ENCODE measurements at regions of chr1 and their contacts with region 1.

Region 1: DNA sequence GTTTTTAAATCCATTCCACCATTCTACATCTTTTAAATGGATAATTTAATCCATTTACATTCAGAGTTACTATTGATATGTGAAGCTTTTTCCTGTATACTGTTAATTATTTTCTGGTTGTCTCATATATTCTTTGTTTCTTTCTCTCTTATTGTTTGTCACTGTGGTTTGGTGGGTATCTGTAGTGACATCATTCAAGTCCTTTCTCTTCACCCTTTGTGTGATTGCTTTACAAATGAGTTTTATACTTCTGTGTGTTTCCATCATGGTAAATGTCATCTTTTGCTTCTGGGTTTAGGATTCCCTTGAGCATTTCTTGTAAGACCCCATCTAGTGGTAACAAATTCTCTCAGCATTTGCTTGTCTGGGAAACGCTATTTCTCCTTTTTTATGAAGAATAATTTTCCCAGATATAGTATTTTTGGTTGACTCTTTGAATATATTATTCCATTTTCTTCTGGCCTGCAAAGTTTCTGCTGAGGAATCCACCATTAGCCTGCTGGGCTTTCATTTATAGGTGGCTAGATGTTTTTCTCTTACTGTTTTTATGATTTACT is 10.2 kb downstream of the LY9 start:
- DNase-seq: peak in 1 of 35 experiments; percentile 22
- ATAC-seq: peak in 1 of 4 experiments; percentile 46
- H3K4me3 ChIP-seq: no peak overlapping the region
- H3K4me3 Mint-ChIP-seq: peak overlapping the region in 2 of 3 donors; percentile 41 to 71
- H3K27ac ChIP-seq: no peak overlapping the region
- H3K27ac Mint-ChIP-seq: peak overlapping the region in 1 of 2 donors; percentile 69
- H3K4me1 ChIP-seq: peaks cover 12 to 38% of the 10 kb centered on the region in 2 experiments
- H3K4me1 Mint-ChIP-seq: peaks cover 84 to 91% (median 85%) of the 10 kb centered on the region in 3 donors
- H3K27me3 ChIP-seq: no peaks in the 10 kb centered on the region
- H3K27me3 Mint-ChIP-seq: no peaks in the 10 kb centered on the region

Region 2: GRCh38 chr1:160795951-160796383 is 10.2 kb before region 1 on chr1 and contains the start of gene LY9:
- CTCF ChIA-PET with region 1: interaction called in 1 of 2 experiments, 19 read pairs
- POLR2A ChIA-PET with region 1: interaction called, 5 to 6 read pairs
- DNase-seq: peak; percentile 45 to 95 (median 84)
- ATAC-seq: peak; percentile 86 to 90 (median 87)
- H3K4me3 ChIP-seq: peak within 1 kb of the TSS; percentile 72 to 92
- H3K4me3 Mint-ChIP-seq: peak within 1 kb of the TSS; percentile 93 to 99 (median 98)
- H3K27ac ChIP-seq: peak within 1 kb of the TSS; percentile 93
- H3K27ac Mint-ChIP-seq: peak within 1 kb of the TSS; percentile 99
- H3K4me1 ChIP-seq: peaks cover 33 to 37% of the 10 kb centered on the region in 2 experiments
- H3K4me1 Mint-ChIP-seq: peaks cover 45 to 66% (median 61%) of the 10 kb centered on the region in 3 donors
- H3K27me3 ChIP-seq: no peaks in the 10 kb centered on the region
- H3K27me3 Mint-ChIP-seq: no peaks in the 10 kb centered on the region
- total RNA-seq, gene LY9: 95.4 to 127 (median 101) TPM

Region 3: DNA sequence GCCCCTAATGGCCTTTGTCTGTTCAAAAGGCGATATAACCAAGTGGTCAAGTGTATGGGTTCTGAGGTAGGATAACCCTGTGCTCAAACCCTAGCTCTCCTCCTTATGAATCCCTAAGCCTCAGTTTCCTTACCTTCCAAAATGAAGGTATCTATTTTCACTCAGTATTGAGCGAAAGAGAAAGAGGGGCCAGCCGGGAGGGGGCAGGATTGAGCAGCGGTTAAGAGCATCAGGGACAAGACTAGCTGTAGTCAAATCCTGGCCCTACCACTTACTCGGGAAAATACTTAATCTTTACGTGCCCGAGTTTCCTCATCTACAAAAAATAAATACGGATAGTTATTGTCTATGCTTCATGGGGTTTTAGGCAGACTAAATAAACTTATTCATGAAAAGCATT is 15.4 kb after region 1 on chr1:
- CTCF ChIA-PET with region 1: interaction called in 1 of 2 experiments, 4 read pairs
- POLR2A ChIA-PET with region 1: interaction called in 1 of 2 experiments, 11 read pairs
- DNase-seq: no peak
- ATAC-seq: no peak
- H3K4me3 ChIP-seq: no peak overlapping the region
- H3K4me3 Mint-ChIP-seq: no peak overlapping the region
- H3K27ac ChIP-seq: no peak overlapping the region
- H3K27ac Mint-ChIP-seq: peak overlapping the region; percentile 70 to 73
- H3K4me1 ChIP-seq: no peaks in the 10 kb centered on the region
- H3K4me1 Mint-ChIP-seq: peaks cover 0 to 6% (median 0%) of the 10 kb centered on the region in 3 donors
- H3K27me3 ChIP-seq: no peaks in the 10 kb centered on the region
- H3K27me3 Mint-ChIP-seq: no peaks in the 10 kb centered on the region

Region 4: DNA sequence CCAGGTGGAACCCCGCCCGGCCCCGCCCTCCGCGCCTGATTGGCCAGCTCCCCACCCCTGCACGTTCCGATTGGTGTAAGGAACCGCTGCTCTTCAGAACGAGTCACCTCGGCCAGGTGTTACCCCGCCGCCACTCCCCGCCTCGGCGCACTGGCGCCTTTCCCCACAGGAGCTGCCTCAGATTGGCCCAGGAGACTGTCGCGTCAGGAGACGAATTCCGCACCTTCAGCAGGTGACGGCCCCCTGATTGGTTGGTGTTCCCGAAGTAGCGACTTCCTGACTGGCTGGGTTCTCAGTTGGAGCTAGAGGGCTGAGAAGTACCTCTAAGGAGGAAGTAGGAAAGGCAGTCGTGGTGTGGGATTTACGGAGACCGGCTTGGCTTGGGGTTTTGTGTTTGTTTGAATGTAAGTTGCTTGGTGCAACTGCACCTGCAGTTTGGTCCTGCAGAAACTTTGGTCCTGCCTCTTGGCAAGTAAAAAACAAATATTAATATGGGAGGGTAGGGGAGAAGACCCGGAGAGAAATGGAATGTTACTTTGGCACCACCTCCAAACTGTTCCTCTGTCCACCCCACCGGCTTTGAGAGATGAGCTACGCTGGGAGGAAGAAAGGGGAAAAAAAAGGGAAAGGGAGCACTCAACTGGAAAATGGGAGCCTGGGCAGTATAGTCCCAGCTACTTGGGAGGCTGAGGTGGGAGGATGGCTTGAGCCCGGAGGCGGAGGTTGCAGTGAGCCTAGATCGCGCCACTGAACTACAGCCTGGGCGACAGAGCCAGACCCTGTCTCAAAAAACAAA is 215.2 kb after region 1 on chr1:
- CTCF ChIA-PET with region 1: no interaction called
- POLR2A ChIA-PET with region 1: interaction called in 1 of 2 experiments, 11 read pairs
- DNase-seq: peak; percentile 72 to 94 (median 91)
- ATAC-seq: peak; percentile 94 to 97 (median 95)
- H3K4me3 ChIP-seq: peak overlapping the region; percentile 74 to 83
- H3K4me3 Mint-ChIP-seq: peak overlapping the region; percentile 92 to 94 (median 94)
- H3K27ac ChIP-seq: peak overlapping the region; percentile 64
- H3K27ac Mint-ChIP-seq: peak overlapping the region; percentile 82 to 93
- H3K4me1 ChIP-seq: peaks cover 10 to 19% of the 10 kb centered on the region in 2 experiments
- H3K4me1 Mint-ChIP-seq: peaks cover 29 to 49% (median 40%) of the 10 kb centered on the region in 3 donors
- H3K27me3 ChIP-seq: no peaks in the 10 kb centered on the region
- H3K27me3 Mint-ChIP-seq: no peaks in the 10 kb centered on the region

Measured in T-cell (primary cell).